ENCODE measurements at regions of chrX and their contacts with region 1.

Region 1: GRCh38 chrX:104684077-104684476 is 118.1 kb downstream of the IL1RAPL2 start:
- DNase-seq: no peak
- H3K4me3 ChIP-seq: no peak overlapping the region
- H3K27ac ChIP-seq: no peak overlapping the region
- H3K4me1 ChIP-seq: peaks cover 5% of the 10 kb centered on the region
- CTCF ChIP-seq: no peak

Region 2: DNA sequence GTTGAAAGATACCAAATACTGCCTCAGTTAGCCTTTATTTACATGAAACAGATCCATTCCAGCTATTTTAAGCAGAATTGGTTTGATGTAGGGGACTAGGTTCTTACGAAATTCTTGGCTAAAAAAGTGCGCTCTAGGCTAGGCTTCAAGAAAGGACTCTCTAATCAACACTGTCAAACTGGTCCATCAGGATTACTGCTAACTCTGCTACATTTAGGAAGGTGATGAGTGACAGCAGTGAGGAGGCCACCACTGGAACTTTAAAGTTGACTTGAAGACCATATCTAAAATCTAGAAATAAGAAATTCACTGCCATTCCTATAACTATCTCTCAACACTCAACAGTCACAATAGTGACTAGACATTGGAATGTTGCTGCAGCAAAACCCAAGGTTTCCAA is 145.7 kb before region 1 on chrX:
- CTCF ChIA-PET with region 1: no interaction called
- POLR2A ChIA-PET with region 1: no interaction called
- intact Hi-C with region 1: no loop called
- DNase-seq: no peak
- H3K4me3 ChIP-seq: no peak overlapping the region
- H3K27ac ChIP-seq: no peak overlapping the region
- H3K4me1 ChIP-seq: no peaks in the 10 kb centered on the region
- CTCF ChIP-seq: no peak

Region 3: GRCh38 chrX:104565791-104566680 is 118.0 kb before region 1 on chrX and contains the start of gene IL1RAPL2:
- CTCF ChIA-PET with region 1: no interaction called
- POLR2A ChIA-PET with region 1: no interaction called
- intact Hi-C with region 1: no loop called
- DNase-seq: no peak
- H3K4me3 ChIP-seq: no peak within 1 kb of the TSS
- H3K27ac ChIP-seq: no peak within 1 kb of the TSS
- H3K4me1 ChIP-seq: no peaks in the 10 kb centered on the region
- CTCF ChIP-seq: no peak
- total RNA-seq, gene IL1RAPL2: not detected in 2 replicates

Region 4: DNA sequence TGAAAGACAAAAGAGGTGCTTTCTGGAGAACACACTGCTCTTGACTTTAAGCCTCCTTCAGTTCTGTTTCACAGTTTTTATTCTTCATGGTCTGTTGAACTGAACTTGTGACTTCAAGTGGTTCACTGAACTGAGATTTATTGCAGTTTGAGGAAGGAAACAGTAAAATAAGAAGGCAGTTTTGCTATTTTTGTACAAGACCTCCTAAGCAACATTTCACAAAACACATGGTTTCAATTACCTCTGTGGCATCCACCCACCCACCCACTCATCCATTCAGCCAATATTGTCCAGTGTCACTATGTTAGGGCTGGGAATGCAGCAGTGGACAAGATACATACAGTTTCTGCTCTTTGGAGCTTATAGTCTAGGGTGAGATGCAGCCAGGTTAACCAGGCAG is 13.2 kb after region 1 on chrX:
- CTCF ChIA-PET with region 1: no interaction called
- POLR2A ChIA-PET with region 1: interaction called, 14 read pairs
- intact Hi-C with region 1: no loop called
- DNase-seq: peak; percentile 80
- H3K4me3 ChIP-seq: peak overlapping the region; percentile 45
- H3K27ac ChIP-seq: peak overlapping the region; percentile 89
- H3K4me1 ChIP-seq: peaks cover 34% of the 10 kb centered on the region
- CTCF ChIP-seq: no peak

Measured in OCI-LY7 (cell line).